ENCODE measurements at regions of chr2 and their contacts with region 1.

Region 1: GRCh38 chr2:20539133-20539719 is 92.4 kb downstream of the RHOB start:
- DNase-seq: peak; percentile 67
- ATAC-seq: peak; percentile 1
- H3K4me3 ChIP-seq: peak overlapping the region in 1 of 3 experiments; percentile 59; a peak in 1 of 6 replicates
- H3K27ac ChIP-seq: peak overlapping the region; percentile 97
- H3K4me1 ChIP-seq: peaks cover 82% of the 10 kb centered on the region
- H3K27me3 ChIP-seq: no peaks in the 10 kb centered on the region
- CTCF ChIP-seq: no peak
- EP300 ChIP-seq: no peak
- POLR2A ChIP-seq: no peak
- RAD21 ChIP-seq: no peak

Region 2: GRCh38 chr2:20365249-20365817 is 173.9 kb before region 1 on chr2:
- CTCF ChIA-PET with region 1: no interaction called
- POLR2A ChIA-PET with region 1: no interaction called
- in situ Hi-C with region 1: no loop called
- intact Hi-C with region 1: no loop called
- DNase-seq: no peak
- ATAC-seq: no peak
- H3K4me3 ChIP-seq: no peak overlapping the region
- H3K27ac ChIP-seq: no peak overlapping the region
- H3K4me1 ChIP-seq: peaks cover 5% of the 10 kb centered on the region; the same call in 1 of the 2 replicates
- H3K27me3 ChIP-seq: peaks cover 0 to 3% of the 10 kb centered on the region in 2 experiments; a peak in 4 of 5 replicates
- CTCF ChIP-seq: no peak
- EP300 ChIP-seq: no peak
- POLR2A ChIP-seq: no peak
- RAD21 ChIP-seq: no peak

Region 3: DNA sequence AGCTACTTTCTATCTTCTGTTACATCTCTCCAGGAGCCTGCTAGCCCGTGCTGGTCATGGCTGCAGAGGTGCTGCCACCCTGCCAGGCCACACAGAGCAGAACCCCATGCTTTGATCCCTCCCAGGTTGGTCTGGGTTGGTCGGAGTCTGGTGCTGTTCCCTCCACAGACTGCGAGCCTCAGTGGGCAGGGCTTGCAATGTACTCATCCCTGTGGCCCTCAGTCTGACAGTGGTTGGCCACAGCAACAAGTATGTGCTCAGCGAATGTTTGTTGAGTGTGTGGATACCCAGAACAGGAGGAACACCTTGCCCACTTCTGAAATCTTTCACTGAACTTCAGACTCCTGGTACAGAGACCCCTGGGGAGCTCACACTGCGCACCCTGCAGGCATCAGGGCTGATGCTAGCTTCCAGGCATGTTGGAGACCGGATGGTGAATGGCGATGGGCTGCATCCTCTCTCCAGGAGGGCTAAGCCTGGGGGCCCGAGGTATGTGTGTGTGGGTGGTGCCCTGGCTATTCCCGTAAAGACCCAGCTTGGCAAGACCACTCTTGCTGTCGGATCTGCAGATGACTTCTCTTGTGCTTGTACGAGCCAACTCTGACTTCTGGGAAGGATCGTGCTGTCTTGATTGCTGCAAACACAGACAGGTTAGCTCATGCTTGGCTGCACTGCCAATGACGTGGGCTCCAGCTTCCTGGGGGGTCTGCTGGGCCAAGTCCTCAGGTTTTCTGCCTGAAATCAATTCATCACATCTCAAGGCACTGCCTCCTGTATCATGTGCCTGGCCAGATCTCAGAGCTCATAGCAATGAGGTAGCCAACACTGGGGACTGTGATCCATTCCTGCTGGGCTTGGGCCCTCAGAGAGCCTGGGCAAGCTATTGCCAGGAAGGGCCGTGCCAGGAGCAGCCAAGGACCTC is 48.7 kb before region 1 on chr2:
- CTCF ChIA-PET with region 1: no interaction called
- POLR2A ChIA-PET with region 1: interaction called, 5 read pairs
- in situ Hi-C with region 1: no loop called
- intact Hi-C with region 1: loop called (anchors 5 kb)
- DNase-seq: no peak
- ATAC-seq: peak; percentile 7; the same call in 2 of the 3 replicates
- H3K4me3 ChIP-seq: no peak overlapping the region
- H3K27ac ChIP-seq: no peak overlapping the region
- H3K4me1 ChIP-seq: peaks cover 74% of the 10 kb centered on the region
- H3K27me3 ChIP-seq: peaks cover 1 to 27% of the 10 kb centered on the region in 2 experiments; a peak in 1 of 5 replicates
- CTCF ChIP-seq: no peak
- EP300 ChIP-seq: no peak
- POLR2A ChIP-seq: no peak
- RAD21 ChIP-seq: no peak

Region 4: GRCh38 chr2:20551260-20551944 is 12.2 kb after region 1 on chr2:
- CTCF ChIA-PET with region 1: no interaction called
- POLR2A ChIA-PET with region 1: interaction called, 19 read pairs
- in situ Hi-C with region 1: no loop called
- intact Hi-C with region 1: no loop called
- DNase-seq: no peak
- ATAC-seq: no peak
- H3K4me3 ChIP-seq: no peak overlapping the region
- H3K27ac ChIP-seq: no peak overlapping the region
- H3K4me1 ChIP-seq: peaks cover 33% of the 10 kb centered on the region
- H3K27me3 ChIP-seq: no peaks in the 10 kb centered on the region
- CTCF ChIP-seq: no peak
- EP300 ChIP-seq: no peak
- POLR2A ChIP-seq: no peak
- RAD21 ChIP-seq: no peak

Region 5: DNA sequence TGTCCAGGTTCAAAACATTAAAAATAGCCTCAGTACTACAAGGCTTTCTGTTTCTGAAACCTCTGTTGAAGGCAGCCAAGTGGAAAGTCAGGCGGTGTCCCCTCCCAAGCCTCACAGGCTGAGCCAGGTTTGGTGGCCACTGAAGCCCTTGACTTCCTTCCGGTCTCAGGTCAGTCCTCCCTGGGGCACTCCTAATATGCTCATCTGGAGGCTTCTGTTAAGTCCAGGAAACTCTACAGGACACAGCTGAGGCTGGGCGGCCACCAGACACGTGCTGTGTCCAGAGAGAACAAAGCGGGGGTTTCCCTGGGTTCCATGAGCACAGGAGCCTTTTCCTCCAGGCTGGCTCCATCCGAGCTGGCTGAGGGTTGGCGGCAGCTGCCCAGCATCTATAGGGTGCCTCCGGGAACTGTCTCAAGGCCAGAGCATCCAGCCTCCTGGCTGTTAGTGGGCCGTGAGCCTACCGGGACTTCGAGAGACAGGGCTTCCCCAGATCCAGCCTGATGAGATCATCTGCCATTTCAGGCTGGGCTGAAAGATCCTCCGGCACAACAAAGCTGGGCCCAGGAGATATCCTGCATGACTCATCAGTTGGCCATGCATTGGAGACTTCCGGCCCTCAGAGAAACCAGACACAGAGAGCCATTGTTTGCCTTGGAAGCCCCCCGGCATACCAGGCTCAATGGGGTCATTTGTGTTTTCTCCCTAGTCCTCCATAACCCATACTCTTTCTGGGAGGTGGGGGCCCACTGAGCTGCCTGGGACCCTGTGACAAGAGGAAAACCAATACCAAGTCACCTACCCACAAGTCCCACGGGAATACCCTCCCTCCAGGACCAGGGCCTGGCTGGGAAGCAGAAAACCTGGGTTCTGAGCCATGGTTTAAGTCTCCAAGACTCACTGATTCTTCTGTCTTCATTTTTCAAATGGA is 39.9 kb after region 1 on chr2:
- CTCF ChIA-PET with region 1: no interaction called
- POLR2A ChIA-PET with region 1: interaction called, 127 read pairs
- in situ Hi-C with region 1: no loop called
- intact Hi-C with region 1: loop called (anchors 1 kb)
- DNase-seq: peak; percentile 100
- ATAC-seq: peak; percentile 83
- H3K4me3 ChIP-seq: 0 out of 6 replicates have a peak overlapping the region, but pooled peaks of 1 of the 3 experiments have one; percentile 0
- H3K27ac ChIP-seq: peak overlapping the region; percentile 97
- H3K4me1 ChIP-seq: peaks cover 98% of the 10 kb centered on the region
- H3K27me3 ChIP-seq: no peaks in the 10 kb centered on the region
- CTCF ChIP-seq: peak; percentile 21; the same call in 1 of the 2 replicates
- EP300 ChIP-seq: peak; percentile 93 to 98
- POLR2A ChIP-seq: peak in 1 of 2 experiments; percentile 49; a peak in 1 of 4 replicates
- RAD21 ChIP-seq: peak; percentile 75

Region 6: DNA sequence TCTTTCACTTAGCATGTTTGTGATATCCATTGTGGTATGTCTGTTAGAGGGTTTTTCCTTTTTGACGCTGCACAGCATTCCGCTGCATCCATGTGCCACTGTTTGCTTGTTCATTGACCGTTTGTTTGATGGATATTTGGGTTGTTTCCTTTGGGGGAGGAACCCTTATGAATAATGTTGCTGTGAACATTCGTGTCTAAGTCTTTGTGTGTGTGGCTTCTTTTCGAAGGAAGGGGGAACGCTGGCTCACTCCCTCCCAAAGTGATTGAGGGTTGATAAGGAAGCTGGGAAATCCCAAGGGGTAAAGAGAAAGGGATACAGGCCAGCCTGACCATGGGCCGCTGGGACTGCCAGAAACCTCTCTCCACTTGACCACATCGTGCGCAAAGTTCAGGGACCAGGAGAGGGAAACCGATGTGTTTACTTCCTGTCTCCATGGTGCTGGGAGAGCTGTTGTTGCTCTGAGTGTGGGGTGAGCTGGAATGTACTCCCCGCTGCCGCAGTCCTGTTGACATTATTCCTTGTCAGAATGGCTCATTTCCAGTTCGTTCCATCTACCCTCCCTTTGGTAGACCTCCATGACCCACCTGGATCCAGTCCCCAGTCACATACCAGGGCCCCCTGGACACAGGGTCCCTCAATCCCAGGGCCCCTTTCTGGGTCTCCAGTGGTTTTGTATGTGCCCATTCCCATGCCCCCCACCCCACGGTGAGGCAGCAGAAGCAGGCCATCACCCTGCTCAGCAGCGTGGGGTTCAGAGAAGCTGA is 72.0 kb after region 1 on chr2:
- CTCF ChIA-PET with region 1: no interaction called
- POLR2A ChIA-PET with region 1: interaction called, 7 read pairs
- in situ Hi-C with region 1: no loop called
- intact Hi-C with region 1: loop called (anchors 1 kb)
- DNase-seq: peak; percentile 100
- ATAC-seq: peak; percentile 94
- H3K4me3 ChIP-seq: peak overlapping the region in 1 of 3 experiments; percentile 35; a peak in 3 of 6 replicates
- H3K27ac ChIP-seq: peak overlapping the region; percentile 95
- H3K4me1 ChIP-seq: peaks cover 78% of the 10 kb centered on the region
- H3K27me3 ChIP-seq: no peaks in the 10 kb centered on the region
- CTCF ChIP-seq: peak; percentile 15; the same call in 1 of the 2 replicates
- EP300 ChIP-seq: peak; percentile 92 to 97
- POLR2A ChIP-seq: peak in 1 of 2 experiments; percentile 81; a peak in 2 of 4 replicates
- RAD21 ChIP-seq: peak; percentile 57